PC-9 (cell line): ENCODE measurements at regions of chr10 and their contacts with region 1.

Region 1: DNA sequence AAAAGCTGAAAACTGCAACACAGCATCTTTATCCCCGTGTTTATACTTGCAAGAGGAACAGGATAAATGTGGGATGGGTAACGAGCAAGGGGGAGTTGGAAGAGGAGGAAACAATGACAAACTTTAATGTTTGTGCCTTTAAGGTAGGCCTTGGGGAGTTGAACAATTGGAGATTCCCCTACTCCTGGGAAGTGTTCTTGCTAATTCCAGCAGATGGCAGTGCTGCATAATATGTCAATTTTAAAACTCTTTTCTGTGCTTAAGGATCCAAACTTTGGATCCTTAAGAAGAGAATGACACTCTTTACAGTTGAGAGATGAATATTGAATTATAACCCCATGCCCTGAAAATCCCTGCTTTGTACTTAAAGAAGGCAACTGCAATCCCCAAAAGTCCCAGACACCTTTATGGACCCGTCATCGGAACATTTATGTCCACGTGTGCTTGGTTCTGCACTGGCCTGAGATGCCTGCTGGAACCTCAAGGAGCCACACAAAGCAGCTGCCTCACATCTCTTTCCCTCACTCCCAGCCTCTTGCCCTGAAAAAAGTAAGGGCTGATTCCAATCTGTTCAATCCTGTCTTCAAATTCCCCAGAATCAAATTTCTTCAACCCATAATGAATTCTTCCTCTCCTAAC is 12.0 kb downstream of the IFIT5 start:
- DNase-seq: peak in 1 of 2 experiments; percentile 16
- H3K4me3 ChIP-seq: no peak overlapping the region
- H3K27ac ChIP-seq: no peak overlapping the region
- H3K4me1 ChIP-seq: peaks cover 9% of the 10 kb centered on the region
- H3K27me3 ChIP-seq: no peaks in the 10 kb centered on the region
- CTCF ChIP-seq: peak; percentile 78

Region 2: DNA sequence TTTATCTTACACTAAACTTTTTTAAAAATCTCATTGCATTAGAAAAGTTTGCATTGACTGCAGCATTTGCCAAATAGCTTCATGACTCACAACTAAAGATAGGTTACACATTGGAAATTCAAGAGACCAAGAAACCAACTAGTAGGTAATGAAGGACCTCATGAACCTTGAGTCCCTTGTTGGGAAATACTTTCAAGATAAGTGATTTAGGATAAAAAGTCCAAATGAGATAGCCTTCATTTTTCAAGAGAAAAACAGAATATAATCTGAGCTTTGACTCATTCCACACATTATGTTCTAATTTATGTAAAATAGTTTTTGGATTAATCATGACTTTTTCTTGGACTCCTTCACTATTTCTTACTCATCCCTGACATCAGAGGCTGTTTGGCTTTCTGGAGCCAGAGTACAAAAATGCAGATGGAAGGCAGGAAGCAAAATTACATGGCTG is 775.2 kb before region 1 on chr10:
- CTCF ChIA-PET with region 1: no interaction called
- POLR2A ChIA-PET with region 1: no interaction called
- intact Hi-C with region 1: no loop called
- DNase-seq: peak in 1 of 2 experiments; percentile 52
- H3K4me3 ChIP-seq: no peak overlapping the region
- H3K27ac ChIP-seq: no peak overlapping the region
- H3K4me1 ChIP-seq: 0 out of 2 replicates have a peak, but pooled peaks cover 5% of the 10 kb centered on the region
- H3K27me3 ChIP-seq: no peaks in the 10 kb centered on the region
- CTCF ChIP-seq: no peak

Region 3: DNA sequence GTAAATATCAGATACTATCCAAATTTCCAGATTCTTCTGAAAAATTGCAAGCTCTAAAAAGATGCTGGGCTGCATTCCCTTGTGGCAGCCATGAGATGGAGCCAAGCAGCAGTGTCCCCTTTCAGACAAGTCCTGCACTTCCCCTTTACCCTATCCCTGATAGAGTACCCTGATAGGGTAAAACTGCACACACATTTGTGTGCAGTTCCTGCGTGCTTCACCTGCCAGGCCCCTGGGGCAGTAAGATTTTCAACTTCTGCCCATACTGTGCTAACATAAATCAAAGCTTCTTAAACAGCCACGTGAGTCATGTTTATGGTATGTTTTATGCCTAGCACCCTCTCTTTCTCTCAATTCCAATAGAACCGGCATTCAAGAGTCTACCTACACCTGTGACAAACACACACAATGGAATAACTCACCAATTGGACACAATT is 40.3 kb after region 1 on chr10:
- CTCF ChIA-PET with region 1: no interaction called
- POLR2A ChIA-PET with region 1: no interaction called
- intact Hi-C with region 1: loop called (anchors 2 kb)
- DNase-seq: peak; percentile 69 to 91
- H3K4me3 ChIP-seq: no peak overlapping the region
- H3K27ac ChIP-seq: peak overlapping the region; percentile 20; the same call in 1 of the 2 replicates
- H3K4me1 ChIP-seq: peaks cover 30% of the 10 kb centered on the region
- H3K27me3 ChIP-seq: no peaks in the 10 kb centered on the region
- CTCF ChIP-seq: peak; percentile 55

Region 4: DNA sequence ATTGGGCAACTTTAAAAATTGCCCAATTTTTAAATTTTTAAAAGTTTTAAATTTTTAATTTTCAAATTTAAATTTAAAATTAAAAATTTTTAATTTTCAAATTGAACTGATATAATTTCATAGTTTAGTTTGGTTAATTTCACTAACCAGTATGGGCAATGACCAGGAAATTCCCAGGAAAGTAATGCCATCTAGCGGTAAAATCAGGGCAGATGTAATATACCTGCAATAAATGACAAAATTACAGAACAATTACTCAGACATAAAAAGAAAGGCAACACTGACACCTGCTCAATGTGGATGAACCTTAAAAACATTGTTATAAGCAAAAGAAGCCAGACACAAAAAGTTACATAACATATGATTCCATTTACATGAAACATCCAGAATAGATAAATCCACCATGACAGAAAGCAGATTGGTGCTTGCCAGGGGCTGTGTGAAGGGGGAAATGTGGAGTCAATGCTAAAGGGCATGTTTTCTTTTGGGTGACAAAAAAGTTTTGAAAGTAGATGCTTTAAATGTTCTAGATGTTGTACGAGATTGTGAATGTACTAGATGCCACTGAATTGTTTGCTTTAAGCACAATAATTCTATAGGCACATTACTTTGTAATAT is 137.6 kb after region 1 on chr10:
- CTCF ChIA-PET with region 1: no interaction called
- POLR2A ChIA-PET with region 1: no interaction called
- intact Hi-C with region 1: loop called (anchors 1 kb)
- DNase-seq: peak in 1 of 2 experiments; percentile 42
- H3K4me3 ChIP-seq: no peak overlapping the region
- H3K27ac ChIP-seq: no peak overlapping the region
- H3K4me1 ChIP-seq: no peaks in the 10 kb centered on the region
- H3K27me3 ChIP-seq: no peaks in the 10 kb centered on the region
- CTCF ChIP-seq: peak; percentile 69

Region 5: GRCh38 chr10:90871766-90872647 is 1445.7 kb after region 1 on chr10 and contains the start of gene RPP30:
- CTCF ChIA-PET with region 1: no interaction called
- POLR2A ChIA-PET with region 1: no interaction called
- intact Hi-C with region 1: loop called (anchors 5 kb)
- DNase-seq: peak; percentile 68 to 70
- H3K4me3 ChIP-seq: peak within 1 kb of the TSS; percentile 78
- H3K27ac ChIP-seq: no peak within 1 kb of the TSS
- H3K4me1 ChIP-seq: peaks cover 15% of the 10 kb centered on the region
- H3K27me3 ChIP-seq: no peaks in the 10 kb centered on the region
- CTCF ChIP-seq: no peak
- total RNA-seq, gene RPP30: 25.4 and 32.4 TPM in 2 replicates